ENCODE measurements at regions of chr22 and their contacts with region 1.

Region 1: GRCh38 chr22:45268958-45269844 is 15.5 kb upstream of the UPK3A start:
- DNase-seq: peak; percentile 84 to 95 (median 87)
- ATAC-seq: peak; percentile 23 to 88 (median 76)
- H3K4me3 ChIP-seq: peak overlapping the region; percentile 33 to 69 (median 56)
- H3K27ac ChIP-seq: peak overlapping the region in 6 of 12 donors; percentile 5 to 37 (median 22)
- H3K4me1 ChIP-seq: peaks cover 0 to 37% (median 23%) of the 10 kb centered on the region in 12 donors
- H3K27me3 ChIP-seq: peaks cover 0 to 5% (median 0%) of the 10 kb centered on the region in 9 donors
- CTCF ChIP-seq: peak; percentile 78 to 98 (median 92)
- POLR2A ChIP-seq: peak in 1 of 2 donors; percentile 9

Region 2: DNA sequence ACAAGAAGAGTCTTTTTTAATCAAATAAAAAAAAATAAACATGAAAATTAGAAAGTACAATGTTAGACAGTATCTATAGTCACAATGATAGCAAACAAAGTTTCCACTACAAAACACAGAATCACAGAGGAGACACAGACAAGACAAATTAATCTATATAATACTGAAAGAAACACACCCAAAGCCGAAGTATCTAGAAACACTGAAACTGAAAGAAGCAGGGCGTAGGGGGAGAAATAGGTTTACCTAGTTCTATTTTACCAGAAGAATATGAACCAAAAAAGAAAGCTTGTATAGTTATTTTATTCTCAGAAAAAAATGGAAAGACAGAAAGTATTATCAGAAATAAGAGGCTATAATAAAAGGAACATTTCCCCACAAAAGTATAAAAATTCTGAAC is 132.6 kb before region 1 on chr22:
- intact Hi-C with region 1: no loop called
- DNase-seq: no peak
- ATAC-seq: no peak
- H3K4me3 ChIP-seq: no peak overlapping the region
- H3K27ac ChIP-seq: no peak overlapping the region
- H3K4me1 ChIP-seq: peaks cover 0 to 10% (median 0%) of the 10 kb centered on the region in 12 donors
- H3K27me3 ChIP-seq: no peaks in the 10 kb centered on the region
- CTCF ChIP-seq: no peak
- POLR2A ChIP-seq: no peak

Region 3: DNA sequence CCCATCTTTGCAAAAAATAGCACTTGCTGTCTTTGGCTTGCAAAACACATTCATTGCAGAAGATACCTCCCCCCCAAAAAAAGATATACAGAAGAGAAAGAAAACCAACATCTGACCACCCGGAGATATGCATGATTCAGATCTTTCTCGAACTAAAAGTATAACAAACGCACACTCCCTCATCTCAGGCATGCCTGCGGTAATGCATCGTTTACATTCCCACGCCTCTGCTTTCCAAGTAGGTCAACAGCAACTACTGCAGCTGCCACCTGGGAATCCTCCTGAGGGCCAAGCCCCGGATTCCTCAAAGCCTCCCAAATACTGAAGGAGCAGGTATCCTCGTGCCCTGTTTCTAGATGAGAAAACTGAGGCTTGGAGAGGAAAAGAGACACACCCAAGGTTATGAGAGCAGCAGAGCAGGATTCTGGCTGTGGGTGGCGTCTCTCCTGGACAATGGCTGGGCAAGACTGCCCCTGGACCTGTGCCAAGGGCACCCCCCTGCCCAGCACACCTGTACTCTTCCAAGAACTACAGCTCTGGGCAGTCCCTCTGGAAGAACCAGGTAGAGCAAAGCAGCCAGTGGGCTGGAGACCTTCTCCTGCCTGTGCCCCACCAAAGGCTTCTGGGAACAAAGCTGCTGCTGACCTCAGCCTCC is 67.4 kb before region 1 on chr22:
- intact Hi-C with region 1: no loop called
- DNase-seq: no peak
- ATAC-seq: no peak
- H3K4me3 ChIP-seq: no peak overlapping the region
- H3K27ac ChIP-seq: peak overlapping the region in 1 of 12 donors; percentile 5
- H3K4me1 ChIP-seq: no peaks in the 10 kb centered on the region
- H3K27me3 ChIP-seq: no peaks in the 10 kb centered on the region
- CTCF ChIP-seq: no peak
- POLR2A ChIP-seq: no peak

Region 4: GRCh38 chr22:45309472-45310227 is 40.4 kb after region 1 on chr22 and contains the start of gene FAM118A:
- intact Hi-C with region 1: loop called in 4 of 10 experiments (anchors 2 to 5 kb)
- DNase-seq: peak; percentile 92 to 99 (median 93)
- ATAC-seq: peak; percentile 93 to 97 (median 96)
- H3K4me3 ChIP-seq: peak within 1 kb of the TSS; percentile 48 to 99 (median 90)
- H3K27ac ChIP-seq: peak within 1 kb of the TSS; percentile 51 to 90 (median 84)
- H3K4me1 ChIP-seq: peaks cover 0 to 34% (median 20%) of the 10 kb centered on the region in 12 donors
- H3K27me3 ChIP-seq: no peaks in the 10 kb centered on the region
- CTCF ChIP-seq: peak in 4 of 12 donors; percentile 16 to 34 (median 25)
- POLR2A ChIP-seq: peak in 1 of 2 donors; percentile 81
- total RNA-seq, gene FAM118A: 4.0 to 46.8 (median 15.0) TPM

Region 5: GRCh38 chr22:45329530-45329936 is 60.3 kb after region 1 on chr22:
- intact Hi-C with region 1: loop called in 2 of 10 experiments (anchors 10 kb)
- DNase-seq: peak; percentile 82 to 89 (median 83)
- ATAC-seq: peak; percentile 82 to 94 (median 84)
- H3K4me3 ChIP-seq: no peak overlapping the region
- H3K27ac ChIP-seq: peak overlapping the region in 10 of 12 donors; percentile 13 to 76 (median 63)
- H3K4me1 ChIP-seq: peaks cover 0 to 31% (median 14%) of the 10 kb centered on the region in 12 donors
- H3K27me3 ChIP-seq: no peaks in the 10 kb centered on the region
- CTCF ChIP-seq: no peak
- POLR2A ChIP-seq: no peak

Region 6: GRCh38 chr22:45435544-45436139 is 166.4 kb after region 1 on chr22:
- intact Hi-C with region 1: loop called (anchors 1 to 2 kb)
- DNase-seq: peak; percentile 82 to 92 (median 87)
- ATAC-seq: peak; percentile 86 to 96 (median 94)
- H3K4me3 ChIP-seq: peak overlapping the region in 8 of 12 donors; percentile 18 to 44 (median 28)
- H3K27ac ChIP-seq: peak overlapping the region in 11 of 12 donors; percentile 17 to 75 (median 61)
- H3K4me1 ChIP-seq: peaks cover 0 to 14% (median 6%) of the 10 kb centered on the region in 12 donors
- H3K27me3 ChIP-seq: peaks cover 0 to 11% (median 0%) of the 10 kb centered on the region in 9 donors
- CTCF ChIP-seq: peak; percentile 93 to 99 (median 96)
- POLR2A ChIP-seq: no peak

Measured in heart left ventricle (tissue), 16 donors.